CD4-positive, alpha-beta T cell (primary cell): ENCODE measurements at regions of chr5 and their contacts with region 1.

Region 1: GRCh38 chr5:72319976-72320752 is at the starts of genes MRPS27 and PTCD2:
- DNase-seq: peak; percentile 88 to 99 (median 92)
- ATAC-seq: peak; percentile 99
- H3K4me3 ChIP-seq: peak within 1 kb of the TSS; percentile 94
- H3K4me3 Mint-ChIP-seq: peak within 1 kb of the TSS; percentile 98
- H3K27ac ChIP-seq: peak within 1 kb of the TSS; percentile 62 to 70
- H3K27ac Mint-ChIP-seq: peak within 1 kb of the TSS; percentile 92
- H3K4me1 ChIP-seq: peaks cover 19% of the 10 kb centered on the region
- H3K4me1 Mint-ChIP-seq: peaks cover 34% of the 10 kb centered on the region
- H3K27me3 ChIP-seq: no peaks in the 10 kb centered on the region
- H3K27me3 Mint-ChIP-seq: no peaks in the 10 kb centered on the region
- CTCF ChIP-seq: no peak
- total RNA-seq, gene MRPS27: 25.0 to 26.1 TPM
- total RNA-seq, gene PTCD2: 2.9 to 3.3 TPM

Region 2: GRCh38 chr5:72185496-72186329 is 134.5 kb before region 1 on chr5:
- CTCF ChIA-PET with region 1: no interaction called
- POLR2A ChIA-PET with region 1: no interaction called
- intact Hi-C with region 1: no loop called
- DNase-seq: no peak
- ATAC-seq: no peak
- H3K4me3 ChIP-seq: no peak overlapping the region
- H3K4me3 Mint-ChIP-seq: no peak overlapping the region
- H3K27ac ChIP-seq: no peak overlapping the region
- H3K27ac Mint-ChIP-seq: no peak overlapping the region
- H3K4me1 ChIP-seq: no peaks in the 10 kb centered on the region
- H3K4me1 Mint-ChIP-seq: no peaks in the 10 kb centered on the region
- H3K27me3 ChIP-seq: peaks cover 2 to 11% of the 10 kb centered on the region in 2 experiments
- H3K27me3 Mint-ChIP-seq: peaks cover 40% of the 10 kb centered on the region
- CTCF ChIP-seq: no peak

Region 3: GRCh38 chr5:72459089-72459661 is 139.0 kb after region 1 on chr5:
- CTCF ChIA-PET with region 1: no interaction called
- POLR2A ChIA-PET with region 1: no interaction called
- intact Hi-C with region 1: no loop called
- DNase-seq: no peak
- ATAC-seq: no peak
- H3K4me3 ChIP-seq: no peak overlapping the region
- H3K4me3 Mint-ChIP-seq: no peak overlapping the region
- H3K27ac ChIP-seq: no peak overlapping the region
- H3K27ac Mint-ChIP-seq: no peak overlapping the region
- H3K4me1 ChIP-seq: no peaks in the 10 kb centered on the region
- H3K4me1 Mint-ChIP-seq: no peaks in the 10 kb centered on the region
- H3K27me3 ChIP-seq: peaks cover 0 to 2% of the 10 kb centered on the region in 2 experiments
- H3K27me3 Mint-ChIP-seq: peaks cover 10% of the 10 kb centered on the region
- CTCF ChIP-seq: no peak

Region 4: DNA sequence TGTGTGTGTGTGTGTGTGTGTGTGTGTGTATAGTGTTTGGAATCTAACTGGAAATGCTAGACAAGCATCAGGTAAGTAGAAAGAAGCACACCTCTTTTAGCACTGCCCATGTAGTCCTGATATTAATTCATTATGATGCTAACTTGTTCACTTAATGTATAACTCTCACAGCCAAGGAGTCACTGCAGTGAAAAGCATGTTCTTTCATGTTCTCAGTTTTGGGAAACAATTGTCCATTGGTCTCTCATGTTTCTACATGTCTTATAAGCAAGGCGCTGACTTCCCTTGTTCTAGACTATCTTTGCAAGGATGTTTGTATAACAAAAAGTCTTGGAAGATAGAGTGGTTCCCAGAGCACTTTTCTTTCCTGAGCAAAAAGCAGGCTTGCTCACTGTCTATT is 347.5 kb after region 1 on chr5:
- CTCF ChIA-PET with region 1: no interaction called
- POLR2A ChIA-PET with region 1: no interaction called
- intact Hi-C with region 1: no loop called
- DNase-seq: no peak
- ATAC-seq: no peak
- H3K4me3 ChIP-seq: no peak overlapping the region
- H3K4me3 Mint-ChIP-seq: no peak overlapping the region
- H3K27ac ChIP-seq: no peak overlapping the region
- H3K27ac Mint-ChIP-seq: no peak overlapping the region
- H3K4me1 ChIP-seq: no peaks in the 10 kb centered on the region
- H3K4me1 Mint-ChIP-seq: no peaks in the 10 kb centered on the region
- H3K27me3 ChIP-seq: peaks cover 0 to 3% of the 10 kb centered on the region in 2 experiments
- H3K27me3 Mint-ChIP-seq: peaks cover 5% of the 10 kb centered on the region
- CTCF ChIP-seq: no peak

Region 5: DNA sequence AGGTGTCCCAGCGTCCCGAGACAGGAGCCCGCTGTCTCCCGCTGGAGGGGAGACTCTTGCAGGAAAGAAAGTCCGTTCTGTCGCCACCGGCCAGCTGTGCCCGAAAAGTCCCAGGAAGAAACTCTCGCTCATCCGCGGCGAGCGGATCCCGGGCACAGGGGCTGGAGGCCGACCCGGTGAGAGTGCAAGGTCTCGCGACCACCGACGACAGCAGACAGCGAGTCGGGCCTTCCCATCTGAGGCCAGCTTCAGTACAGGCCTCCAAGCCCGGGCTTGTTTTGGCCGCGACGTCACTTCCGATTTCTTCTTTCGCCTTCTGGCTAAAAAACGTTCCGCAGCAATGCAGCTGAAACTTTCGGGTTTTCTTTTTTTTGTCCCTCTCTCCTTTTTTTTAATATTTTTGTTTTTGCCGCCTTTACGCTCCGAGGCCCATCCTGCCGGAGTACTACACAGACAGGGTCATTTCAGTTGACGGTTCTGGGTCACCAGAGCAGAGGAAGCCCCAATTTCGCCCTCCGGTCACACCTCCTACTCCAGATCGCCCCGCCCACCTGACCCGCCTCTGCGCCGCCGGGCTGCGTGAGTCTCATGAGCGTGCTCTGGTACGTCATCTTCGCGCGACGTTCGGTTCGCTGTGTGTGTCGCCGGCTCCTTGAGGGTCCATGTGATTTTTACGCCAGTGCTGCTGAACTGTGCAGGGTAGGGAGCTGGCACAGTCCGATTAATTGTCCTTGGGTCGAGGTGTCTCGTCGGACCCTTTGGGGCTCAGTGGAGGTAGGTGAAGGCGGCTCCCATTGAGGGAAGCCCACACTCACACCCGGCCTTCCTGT is 1245.2 kb after region 1 on chr5 and contains the starts of genes ANKRA2 and UTP15:
- CTCF ChIA-PET with region 1: no interaction called
- POLR2A ChIA-PET with region 1: no interaction called
- intact Hi-C with region 1: loop called in 1 of 2 experiments (anchors 10 kb)
- DNase-seq: peak; percentile 96 to 100 (median 98)
- ATAC-seq: peak; percentile 92
- H3K4me3 ChIP-seq: peak within 1 kb of the TSS; percentile 81
- H3K4me3 Mint-ChIP-seq: peak within 1 kb of the TSS; percentile 93
- H3K27ac ChIP-seq: peak within 1 kb of the TSS; percentile 90 to 94
- H3K27ac Mint-ChIP-seq: peak within 1 kb of the TSS; percentile 95
- H3K4me1 ChIP-seq: peaks cover 14% of the 10 kb centered on the region
- H3K4me1 Mint-ChIP-seq: peaks cover 63% of the 10 kb centered on the region
- H3K27me3 ChIP-seq: no peaks in the 10 kb centered on the region
- H3K27me3 Mint-ChIP-seq: no peaks in the 10 kb centered on the region
- CTCF ChIP-seq: no peak
- total RNA-seq, gene ANKRA2: 45.0 to 45.1 TPM
- total RNA-seq, gene UTP15: 52.0 to 55.2 TPM